ENCODE measurements at regions of chr7 and their contacts with region 1.

Region 1: GRCh38 chr7:150378853-150379440 is at the start of gene ZNF775:
- DNase-seq: peak; percentile 97 to 98
- ATAC-seq: peak; percentile 99
- H3K4me3 ChIP-seq: peak within 1 kb of the TSS; percentile 75 to 92
- H3K27ac ChIP-seq: peak within 1 kb of the TSS in 1 of 2 donors; percentile 12
- H3K4me1 ChIP-seq: no peaks in the 10 kb centered on the region
- H3K27me3 ChIP-seq: no peaks in the 10 kb centered on the region
- total RNA-seq, gene ZNF775: 3.1 to 6.4 TPM

Region 2: DNA sequence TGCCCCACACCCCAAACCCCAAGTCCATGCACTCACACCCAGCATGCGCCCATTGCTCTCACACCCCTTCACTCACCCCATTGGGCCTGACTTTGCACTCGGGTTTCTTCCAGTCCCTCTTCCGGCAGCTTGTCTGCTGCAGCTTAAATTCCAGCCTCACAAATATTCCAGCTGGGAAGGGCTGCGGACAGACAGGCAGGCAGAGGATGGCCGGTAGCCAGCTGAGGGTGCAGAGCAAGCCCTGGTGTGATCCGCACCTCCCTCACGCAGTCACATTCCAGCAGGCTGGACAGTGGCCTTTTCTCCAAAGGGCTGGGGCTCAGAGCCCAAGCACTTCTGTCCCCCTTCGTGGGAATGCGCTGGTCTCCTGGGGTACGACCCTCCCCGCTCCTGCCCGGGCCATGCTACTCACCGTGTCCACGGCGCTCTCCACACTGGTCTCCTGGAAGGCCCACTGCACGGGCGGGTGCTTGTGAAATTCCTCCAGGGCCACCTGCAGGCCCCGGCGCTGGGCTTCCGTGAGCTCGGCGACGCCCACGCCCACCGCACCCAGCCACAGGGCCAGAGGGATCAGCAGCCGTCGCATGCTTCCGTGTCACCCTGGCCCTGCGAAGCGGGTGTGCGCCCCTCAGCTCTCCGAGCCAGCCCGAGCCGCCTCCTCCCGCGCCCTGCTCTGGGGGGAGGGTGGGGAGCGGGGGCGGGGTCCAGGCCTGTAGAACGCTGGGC is 38.8 kb before region 1 on chr7:
- intact Hi-C with region 1: loop called in 1 of 2 experiments (anchors 5 kb)
- DNase-seq: no peak
- ATAC-seq: peak; percentile 29
- H3K4me3 ChIP-seq: peak overlapping the region in 1 of 2 donors; percentile 44
- H3K27ac ChIP-seq: no peak overlapping the region
- H3K4me1 ChIP-seq: no peaks in the 10 kb centered on the region
- H3K27me3 ChIP-seq: no peaks in the 10 kb centered on the region

Region 3: DNA sequence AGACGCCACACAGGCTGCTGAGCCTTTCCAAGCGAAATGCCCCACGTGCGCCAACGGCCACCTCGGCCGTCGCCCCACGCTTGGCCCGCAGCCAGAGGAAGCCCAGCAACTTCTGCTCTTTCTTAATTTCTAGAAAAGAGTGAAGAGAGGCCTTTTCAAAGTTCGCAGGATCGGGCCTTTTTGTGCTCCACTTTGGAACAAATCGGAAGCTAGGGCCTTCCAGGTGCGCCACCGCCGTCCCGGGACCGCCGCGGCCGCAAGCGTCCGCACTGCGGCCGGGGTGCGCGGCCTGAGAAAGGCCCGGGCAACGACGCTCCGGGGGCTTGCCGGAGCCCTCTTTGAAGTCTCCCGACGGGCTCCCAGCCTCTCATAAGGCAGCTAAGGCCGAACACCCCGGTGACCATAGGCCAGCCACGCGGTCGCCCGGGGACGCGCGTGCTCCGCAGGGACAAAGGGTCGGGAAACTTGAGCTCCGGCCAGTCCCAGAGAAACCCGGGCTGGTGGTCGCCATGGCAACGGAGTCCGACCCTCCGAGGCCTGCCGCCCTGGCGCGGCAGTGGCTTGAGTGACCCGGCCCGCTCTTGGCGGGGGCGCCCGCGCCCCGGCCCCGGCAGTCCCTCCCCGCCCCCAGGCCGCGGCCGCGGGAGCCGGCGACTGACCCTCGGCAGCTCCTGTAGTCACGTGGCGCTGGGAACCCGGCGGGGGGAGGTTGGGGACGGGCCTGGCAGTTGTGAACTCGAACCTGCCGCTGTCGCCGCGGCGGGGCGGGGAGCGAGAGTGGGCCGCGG is 10.7 kb before region 1 on chr7 and contains the start of gene REPIN1:
- intact Hi-C with region 1: loop called in 1 of 2 experiments (anchors 1 kb)
- DNase-seq: peak; percentile 97
- ATAC-seq: peak; percentile 92
- H3K4me3 ChIP-seq: peak within 1 kb of the TSS; percentile 64 to 74
- H3K27ac ChIP-seq: peak within 1 kb of the TSS; percentile 62 to 88
- H3K4me1 ChIP-seq: no peaks in the 10 kb centered on the region
- H3K27me3 ChIP-seq: no peaks in the 10 kb centered on the region
- total RNA-seq, gene REPIN1: 52.0 to 56.7 TPM

Region 4: GRCh38 chr7:150404805-150405583 is 26.0 kb after region 1 on chr7:
- intact Hi-C with region 1: loop called in 1 of 2 experiments (anchors 2 kb)
- DNase-seq: peak; percentile 94 to 96
- ATAC-seq: peak; percentile 96
- H3K4me3 ChIP-seq: peak overlapping the region; percentile 60 to 63
- H3K27ac ChIP-seq: peak overlapping the region; percentile 46 to 58
- H3K4me1 ChIP-seq: no peaks in the 10 kb centered on the region
- H3K27me3 ChIP-seq: no peaks in the 10 kb centered on the region

Region 5: GRCh38 chr7:150420987-150421674 is 42.2 kb after region 1 on chr7:
- intact Hi-C with region 1: no loop called
- DNase-seq: peak; percentile 86 to 93
- ATAC-seq: peak; percentile 92
- H3K4me3 ChIP-seq: no peak overlapping the region
- H3K27ac ChIP-seq: no peak overlapping the region
- H3K4me1 ChIP-seq: no peaks in the 10 kb centered on the region
- H3K27me3 ChIP-seq: no peaks in the 10 kb centered on the region

Region 6: GRCh38 chr7:151368136-151368571 is 989.2 kb after region 1 on chr7:
- intact Hi-C with region 1: no loop called
- DNase-seq: peak; percentile 88 to 93
- ATAC-seq: peak; percentile 93
- H3K4me3 ChIP-seq: no peak overlapping the region
- H3K27ac ChIP-seq: no peak overlapping the region
- H3K4me1 ChIP-seq: peaks cover 0 to 7% of the 10 kb centered on the region in 2 donors
- H3K27me3 ChIP-seq: no peaks in the 10 kb centered on the region

Measured in aorta (tissue), 5 donors.